AG04450 (cell line): ENCODE measurements at regions of chr7 and their contacts with region 1.

Region 1: GRCh38 chr7:5625938-5626337 is 155.5 kb downstream of the RNF216 start:
- DNase-seq: peak; percentile 74
- H3K4me3 ChIP-seq: no peak overlapping the region
- H3K27ac ChIP-seq: peak overlapping the region; percentile 77
- H3K27me3 ChIP-seq: no peaks in the 10 kb centered on the region
- CTCF ChIP-seq: peak; percentile 44

Region 2: GRCh38 chr7:6057316-6058129 is 431.6 kb after region 1 on chr7:
- CTCF ChIA-PET with region 1: no interaction called
- POLR2A ChIA-PET with region 1: interaction called, 10 read pairs
- DNase-seq: no peak
- H3K4me3 ChIP-seq: peak overlapping the region; percentile 86
- H3K27ac ChIP-seq: no peak overlapping the region
- H3K27me3 ChIP-seq: no peaks in the 10 kb centered on the region
- CTCF ChIP-seq: no peak